ENCODE measurements at regions of chr13 and their contacts with region 1.

Region 1: DNA sequence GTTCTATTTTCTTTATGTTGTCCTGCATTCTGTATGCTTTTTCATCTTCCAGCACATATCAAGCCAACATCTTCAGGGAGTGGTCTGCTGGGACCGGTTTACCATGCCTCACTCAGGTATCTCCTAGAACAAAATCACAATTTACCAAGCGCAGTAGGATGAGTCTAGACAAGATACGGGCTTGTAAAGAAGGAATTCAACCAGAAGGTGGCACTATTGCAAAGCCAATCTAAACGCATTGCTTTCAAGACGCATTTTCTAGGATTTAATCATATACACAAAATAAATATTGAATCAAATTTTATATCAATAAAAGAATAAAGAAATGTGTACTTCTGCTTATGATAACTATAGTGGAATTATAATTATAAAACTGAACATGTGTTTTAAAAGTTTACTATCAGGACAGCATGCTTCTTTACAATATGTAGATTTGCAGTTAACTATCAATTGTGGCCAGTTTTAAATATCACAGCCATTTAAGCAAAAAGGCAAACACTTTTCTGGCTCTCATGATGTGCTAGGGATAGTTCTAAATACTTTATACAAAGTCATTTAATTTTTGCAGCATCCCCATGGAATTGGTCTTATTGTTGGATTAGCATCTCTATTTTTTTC is 16.1 kb upstream of the TPP2 start:
- DNase-seq: no peak
- H3K4me3 ChIP-seq: no peak overlapping the region
- H3K27ac ChIP-seq: no peak overlapping the region
- H3K4me1 ChIP-seq: no peaks in the 10 kb centered on the region
- H3K27me3 ChIP-seq: no peaks in the 10 kb centered on the region
- CTCF ChIP-seq: peak; percentile 18 to 54 (median 52)
- EP300 ChIP-seq: no peak
- POLR2A ChIP-seq: no peak

Region 2: DNA sequence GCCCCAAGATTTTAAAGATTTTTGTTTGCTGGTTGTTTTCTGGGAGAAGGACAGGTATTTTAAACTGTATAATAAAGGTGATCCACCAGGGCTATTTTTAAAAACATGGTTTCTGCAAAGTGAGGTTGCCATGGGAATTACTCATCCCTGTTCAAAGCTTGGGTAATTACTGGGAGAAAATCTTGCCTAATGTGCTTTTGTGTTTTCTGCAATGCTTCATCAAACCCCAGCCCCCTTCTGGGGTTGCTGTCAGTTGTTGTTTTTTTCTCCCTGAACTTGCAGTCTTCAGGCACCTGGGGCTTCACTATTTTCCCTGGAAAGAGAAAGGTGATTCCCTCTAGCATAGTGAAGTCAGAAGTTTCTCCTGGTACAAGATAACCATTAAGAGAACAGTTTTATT is 1441.6 kb before region 1 on chr13:
- intact Hi-C with region 1: loop called in 1 of 4 experiments (anchors 10 kb)
- DNase-seq: no peak
- H3K4me3 ChIP-seq: no peak overlapping the region
- H3K27ac ChIP-seq: no peak overlapping the region
- H3K4me1 ChIP-seq: no peaks in the 10 kb centered on the region
- H3K27me3 ChIP-seq: no peaks in the 10 kb centered on the region
- CTCF ChIP-seq: no peak
- EP300 ChIP-seq: no peak
- POLR2A ChIP-seq: no peak

Region 3: DNA sequence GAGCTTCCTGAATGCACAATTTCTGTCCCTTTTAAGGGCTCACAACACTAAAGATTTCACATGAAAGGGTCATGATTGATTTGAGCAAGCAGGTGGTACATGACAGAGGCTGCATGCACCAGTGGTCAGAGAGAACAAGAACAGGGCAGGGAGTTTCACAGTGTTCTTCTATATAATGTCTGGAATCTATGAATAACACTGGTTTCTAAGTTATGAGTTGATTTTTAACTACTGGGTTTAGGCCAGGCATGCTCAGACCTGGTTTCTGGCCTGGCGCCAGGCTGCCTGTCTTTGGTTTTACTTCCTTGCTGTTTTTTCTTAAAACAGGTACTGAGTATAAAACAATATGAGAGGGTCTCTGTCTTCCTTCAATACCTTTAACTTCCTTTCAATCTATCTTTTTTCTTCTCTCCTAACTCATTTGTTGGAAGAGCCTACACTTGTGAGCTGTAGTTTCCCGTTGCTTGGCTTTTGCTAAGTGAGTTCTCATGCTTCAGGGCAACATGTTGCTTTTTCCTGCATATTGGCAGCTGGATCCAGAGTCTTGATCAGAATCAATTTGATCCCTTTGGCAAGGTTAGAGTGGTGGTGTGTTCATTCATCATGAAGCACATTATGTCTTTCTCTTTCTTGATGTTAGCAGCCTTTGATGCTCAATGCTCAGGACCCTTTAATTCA is 140.3 kb before region 1 on chr13:
- intact Hi-C with region 1: no loop called
- DNase-seq: no peak
- H3K4me3 ChIP-seq: no peak overlapping the region
- H3K27ac ChIP-seq: no peak overlapping the region
- H3K4me1 ChIP-seq: no peaks in the 10 kb centered on the region
- H3K27me3 ChIP-seq: no peaks in the 10 kb centered on the region
- CTCF ChIP-seq: no peak
- EP300 ChIP-seq: no peak
- POLR2A ChIP-seq: no peak

Region 4: GRCh38 chr13:102626928-102627327 is 46.3 kb after region 1 on chr13:
- intact Hi-C with region 1: no loop called
- DNase-seq: no peak
- H3K4me3 ChIP-seq: no peak overlapping the region
- H3K27ac ChIP-seq: no peak overlapping the region
- H3K4me1 ChIP-seq: no peaks in the 10 kb centered on the region
- H3K27me3 ChIP-seq: no peaks in the 10 kb centered on the region
- CTCF ChIP-seq: no peak
- EP300 ChIP-seq: no peak
- POLR2A ChIP-seq: no peak

Region 5: GRCh38 chr13:102724923-102725322 is 144.3 kb after region 1 on chr13:
- intact Hi-C with region 1: loop called in 2 of 4 experiments (anchors 2 to 5 kb)
- DNase-seq: no peak
- H3K4me3 ChIP-seq: no peak overlapping the region
- H3K27ac ChIP-seq: no peak overlapping the region
- H3K4me1 ChIP-seq: no peaks in the 10 kb centered on the region
- H3K27me3 ChIP-seq: no peaks in the 10 kb centered on the region
- CTCF ChIP-seq: no peak
- EP300 ChIP-seq: no peak
- POLR2A ChIP-seq: no peak

Region 6: DNA sequence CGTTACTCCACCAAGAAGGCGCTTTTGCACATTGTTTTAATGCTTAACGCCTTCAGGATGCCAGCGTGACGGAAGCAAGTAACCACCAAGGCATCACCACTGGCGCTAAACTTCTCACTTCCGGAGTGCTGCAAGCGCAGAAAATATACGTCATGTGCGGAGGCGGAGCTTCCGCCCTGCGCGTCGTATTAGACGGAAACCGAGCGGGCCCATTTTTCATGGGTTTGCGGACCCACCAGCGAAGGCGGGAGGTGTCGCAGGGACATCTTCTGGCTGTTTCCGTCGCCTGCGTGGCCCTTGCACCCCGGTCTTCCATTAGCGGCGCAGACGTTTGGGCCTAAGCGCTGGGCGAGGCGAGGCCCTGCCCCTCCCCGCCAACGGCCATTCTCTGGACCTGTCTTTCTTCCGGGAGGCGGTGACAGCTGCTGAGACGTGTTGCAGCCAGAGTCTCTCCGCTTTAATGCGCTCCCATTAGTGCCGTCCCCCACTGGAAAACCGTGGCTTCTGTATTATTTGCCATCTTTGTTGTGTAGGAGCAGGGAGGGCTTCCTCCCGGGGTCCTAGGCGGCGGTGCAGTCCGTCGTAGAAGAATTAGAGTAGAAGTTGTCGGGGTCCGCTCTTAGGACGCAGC is 265.1 kb after region 1 on chr13 and contains the start of gene ERCC5:
- intact Hi-C with region 1: loop called in 3 of 4 experiments (anchors 5 kb)
- DNase-seq: peak; percentile 91 to 95 (median 95)
- H3K4me3 ChIP-seq: peak within 1 kb of the TSS; percentile 99
- H3K27ac ChIP-seq: peak within 1 kb of the TSS; percentile 79 to 94
- H3K4me1 ChIP-seq: peaks cover 2% of the 10 kb centered on the region
- H3K27me3 ChIP-seq: no peaks in the 10 kb centered on the region
- CTCF ChIP-seq: peak in 2 of 3 donors; percentile 13 to 25
- EP300 ChIP-seq: no peak
- POLR2A ChIP-seq: peak; percentile 83
- total RNA-seq, gene ERCC5: 38.4 to 65.2 (median 46.1) TPM

Region 7: DNA sequence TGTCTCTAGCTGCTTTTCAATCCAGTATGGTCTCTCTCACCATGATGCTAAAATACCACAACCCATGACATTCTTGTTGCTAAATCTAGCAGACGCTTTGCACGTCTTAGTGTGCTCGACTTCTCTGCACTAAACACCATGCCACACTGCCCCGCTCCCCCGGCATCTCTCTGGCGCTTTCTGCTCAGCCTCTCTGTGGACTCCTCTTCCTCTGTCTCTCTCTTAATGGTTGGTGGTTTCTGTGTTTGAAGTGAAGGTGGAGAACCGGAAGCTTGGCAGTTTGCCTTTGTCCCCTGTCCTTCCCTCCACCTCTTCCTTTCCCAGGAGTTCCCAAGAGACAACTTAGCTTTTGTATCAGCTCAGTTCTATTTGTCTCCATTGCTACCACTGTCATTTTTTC is 274.0 kb after region 1 on chr13:
- intact Hi-C with region 1: loop called in 3 of 4 experiments (anchors 5 kb)
- DNase-seq: no peak
- H3K4me3 ChIP-seq: no peak overlapping the region
- H3K27ac ChIP-seq: no peak overlapping the region
- H3K4me1 ChIP-seq: no peaks in the 10 kb centered on the region
- H3K27me3 ChIP-seq: no peaks in the 10 kb centered on the region
- CTCF ChIP-seq: no peak
- EP300 ChIP-seq: no peak
- POLR2A ChIP-seq: no peak

Measured in ovary (tissue), 10 donors.